K562 (cell line): ENCODE measurements at regions of chr10 and their contacts with region 1.

Region 1: GRCh38 chr10:16828114-16828568 is 10.9 kb upstream of the RSU1 start:
- DNase-seq: peak; percentile 22 to 85 (median 28)
- ATAC-seq: peak; percentile 87
- H3K4me3 ChIP-seq: no peak overlapping the region
- H3K27ac ChIP-seq: no peak overlapping the region
- H3K4me1 ChIP-seq: no peaks in the 10 kb centered on the region; a peak in 1 of 5 replicates
- H3K27me3 ChIP-seq: no peaks in the 10 kb centered on the region; a peak in 1 of 5 replicates
- CTCF ChIP-seq: peak; percentile 60 to 77 (median 60)
- EP300 ChIP-seq: no peak
- POLR2A ChIP-seq: no peak
- RAD21 ChIP-seq: peak; percentile 64 to 78

Region 2: GRCh38 chr10:16724509-16724908 is 103.6 kb before region 1 on chr10:
- CTCF ChIA-PET with region 1: no interaction called
- POLR2A ChIA-PET with region 1: no interaction called
- in situ Hi-C with region 1: no loop called
- intact Hi-C with region 1: no loop called
- DNase-seq: no peak
- ATAC-seq: no peak
- H3K4me3 ChIP-seq: no peak overlapping the region
- H3K27ac ChIP-seq: no peak overlapping the region
- H3K4me1 ChIP-seq: no peaks in the 10 kb centered on the region; a peak in 1 of 5 replicates
- H3K27me3 ChIP-seq: no peaks in the 10 kb centered on the region
- CTCF ChIP-seq: no peak
- EP300 ChIP-seq: no peak
- POLR2A ChIP-seq: no peak
- RAD21 ChIP-seq: no peak

Region 3: GRCh38 chr10:17257466-17258321 is 429.6 kb after region 1 on chr10:
- CTCF ChIA-PET with region 1: interaction called, 16 read pairs
- POLR2A ChIA-PET with region 1: interaction called, 3 read pairs
- in situ Hi-C with region 1: no loop called
- intact Hi-C with region 1: loop called (anchors 5 kb)
- DNase-seq: peak; percentile 63 to 82 (median 67)
- ATAC-seq: peak; percentile 96
- H3K4me3 ChIP-seq: no peak overlapping the region
- H3K27ac ChIP-seq: no peak overlapping the region
- H3K4me1 ChIP-seq: no peaks in the 10 kb centered on the region; a peak in 1 of 5 replicates
- H3K27me3 ChIP-seq: no peaks in the 10 kb centered on the region
- CTCF ChIP-seq: peak; percentile 79 to 94 (median 80)
- EP300 ChIP-seq: no peak
- POLR2A ChIP-seq: no peak
- RAD21 ChIP-seq: peak; percentile 95 to 98

Region 4: GRCh38 chr10:17292375-17292774 is 464.2 kb after region 1 on chr10:
- CTCF ChIA-PET with region 1: no interaction called
- POLR2A ChIA-PET with region 1: no interaction called
- in situ Hi-C with region 1: no loop called
- intact Hi-C with region 1: no loop called
- DNase-seq: no peak
- ATAC-seq: no peak
- H3K4me3 ChIP-seq: no peak overlapping the region
- H3K27ac ChIP-seq: no peak overlapping the region
- H3K4me1 ChIP-seq: peaks cover 0 to 3% of the 10 kb centered on the region in 2 experiments; a peak in 1 of 5 replicates
- H3K27me3 ChIP-seq: no peaks in the 10 kb centered on the region
- CTCF ChIP-seq: no peak
- EP300 ChIP-seq: no peak
- POLR2A ChIP-seq: no peak
- RAD21 ChIP-seq: no peak

Region 5: DNA sequence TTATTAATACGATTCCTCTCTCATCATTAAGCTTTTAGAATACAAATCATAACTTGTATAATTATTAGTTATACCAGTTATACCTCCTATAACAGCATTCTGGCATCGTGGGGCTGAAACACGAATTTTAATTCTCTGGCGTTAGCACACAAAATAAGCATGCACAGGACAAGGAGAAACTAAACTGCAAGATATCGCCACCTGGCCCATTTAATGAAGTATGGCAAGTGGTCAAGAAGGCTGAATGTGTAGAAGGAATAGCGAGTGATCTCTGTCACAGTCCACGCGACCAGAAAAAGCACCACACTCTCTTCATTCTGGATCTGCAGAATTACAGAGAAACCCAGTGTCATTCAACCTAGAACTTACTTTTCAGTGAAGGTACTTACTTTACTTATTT is 770.9 kb after region 1 on chr10:
- CTCF ChIA-PET with region 1: no interaction called
- POLR2A ChIA-PET with region 1: no interaction called
- in situ Hi-C with region 1: loop called (anchors 10 kb)
- intact Hi-C with region 1: loop called (anchors 10 kb)
- DNase-seq: peak; percentile 19 to 69 (median 39)
- ATAC-seq: peak; percentile 97
- H3K4me3 ChIP-seq: no peak overlapping the region
- H3K27ac ChIP-seq: no peak overlapping the region
- H3K4me1 ChIP-seq: peaks cover 2 to 6% of the 10 kb centered on the region in 2 experiments; a peak in 2 of 5 replicates
- H3K27me3 ChIP-seq: no peaks in the 10 kb centered on the region
- CTCF ChIP-seq: peak; percentile 49 to 63 (median 61)
- EP300 ChIP-seq: no peak
- POLR2A ChIP-seq: no peak
- RAD21 ChIP-seq: peak; percentile 77 to 88

Region 6: GRCh38 chr10:17742918-17743317 is 914.8 kb after region 1 on chr10:
- CTCF ChIA-PET with region 1: no interaction called
- POLR2A ChIA-PET with region 1: no interaction called
- in situ Hi-C with region 1: loop called (anchors 25 kb)
- intact Hi-C with region 1: no loop called
- DNase-seq: peak; percentile 56 to 74 (median 58)
- ATAC-seq: peak; percentile 77
- H3K4me3 ChIP-seq: no peak overlapping the region
- H3K27ac ChIP-seq: no peak overlapping the region
- H3K4me1 ChIP-seq: peaks cover 4 to 5% of the 10 kb centered on the region in 2 experiments; a peak in 2 of 5 replicates
- H3K27me3 ChIP-seq: no peaks in the 10 kb centered on the region
- CTCF ChIP-seq: peak; percentile 68 to 84 (median 78)
- EP300 ChIP-seq: no peak
- POLR2A ChIP-seq: no peak
- RAD21 ChIP-seq: peak; percentile 64 to 72

Region 7: DNA sequence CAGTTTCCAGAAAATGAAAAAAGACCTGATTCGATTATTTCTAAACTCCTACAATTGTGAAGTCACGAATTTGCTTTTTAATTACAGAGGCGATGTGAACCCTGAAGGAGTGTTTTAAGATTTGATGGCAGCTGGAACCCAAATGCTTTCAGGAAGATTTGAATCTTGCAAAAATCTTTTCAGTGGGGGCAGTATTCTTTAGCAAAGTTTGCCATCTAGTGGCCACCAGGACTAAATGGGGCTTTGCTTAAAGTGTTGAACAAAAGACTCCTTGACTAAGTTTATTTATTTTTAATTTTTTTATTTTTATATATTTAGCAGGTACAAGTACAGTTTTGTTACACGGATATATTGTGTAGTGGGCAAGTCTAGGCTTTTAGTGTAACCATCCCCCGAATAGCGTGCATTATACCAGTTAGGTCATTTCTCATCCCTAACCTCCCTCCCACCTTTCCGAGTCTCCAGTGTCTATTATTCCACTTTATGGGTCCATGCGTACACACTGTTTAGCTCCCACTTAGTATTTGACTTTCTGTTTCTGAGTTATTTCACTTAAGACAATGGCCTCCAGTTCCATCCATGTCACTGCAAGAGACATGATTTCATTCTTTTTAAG is 1410.8 kb after region 1 on chr10:
- CTCF ChIA-PET with region 1: no interaction called
- POLR2A ChIA-PET with region 1: no interaction called
- in situ Hi-C with region 1: loop called (anchors 25 kb)
- intact Hi-C with region 1: no loop called
- DNase-seq: peak; percentile 16 to 46 (median 34)
- ATAC-seq: 0 out of 3 replicates have a peak, but pooled peaks have one; percentile 53
- H3K4me3 ChIP-seq: no peak overlapping the region
- H3K27ac ChIP-seq: no peak overlapping the region
- H3K4me1 ChIP-seq: no peaks in the 10 kb centered on the region
- H3K27me3 ChIP-seq: peaks cover 0 to 2% of the 10 kb centered on the region in 2 experiments; a peak in 1 of 5 replicates
- CTCF ChIP-seq: peak; percentile 55 to 79 (median 64); a peak in 5 of 6 replicates
- EP300 ChIP-seq: no peak
- POLR2A ChIP-seq: no peak
- RAD21 ChIP-seq: peak; percentile 55 to 62